T-cell (primary cell): ENCODE measurements at regions of chr10 and their contacts with region 1.

Region 1: DNA sequence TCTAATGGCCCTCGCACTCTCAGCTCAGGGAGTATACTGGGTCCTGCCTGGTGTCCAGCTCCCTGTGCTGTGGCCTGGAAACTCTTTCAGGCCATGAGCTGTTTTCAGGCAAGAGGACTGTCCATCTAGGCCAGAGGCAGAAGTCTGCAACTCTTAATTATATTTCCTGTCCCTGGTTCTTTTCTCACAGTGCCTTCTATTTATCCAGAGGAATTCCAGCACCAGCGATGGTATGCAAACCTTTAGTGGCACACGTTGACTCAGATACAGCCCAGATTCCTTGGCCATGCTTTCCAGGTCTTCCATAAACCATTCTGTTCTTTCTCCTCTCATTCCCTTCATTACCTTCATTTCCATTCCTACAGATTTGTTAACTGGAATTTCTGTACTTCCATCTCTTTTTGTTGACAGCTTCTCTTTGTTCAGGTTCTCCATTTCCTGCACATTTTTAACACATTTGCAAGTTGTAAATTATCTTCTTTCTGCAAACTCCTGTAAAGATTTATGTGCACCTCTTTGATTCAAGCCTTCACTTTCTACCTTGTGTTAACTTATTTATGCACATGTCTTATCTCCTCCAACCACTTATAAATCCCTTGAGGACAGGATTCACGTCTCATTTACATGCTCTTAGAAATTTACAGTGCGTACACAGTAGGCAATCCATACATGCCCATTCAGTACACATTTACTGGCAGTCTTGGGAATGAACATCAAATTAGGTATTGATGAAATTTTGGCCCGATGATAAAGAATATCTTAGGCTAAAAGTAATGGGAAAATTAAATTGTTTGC is 172.1 kb downstream of the CELF2 start:
- DNase-seq: no peak
- ATAC-seq: no peak
- H3K4me3 ChIP-seq: peak overlapping the region in 1 of 2 donors; percentile 27
- H3K4me3 Mint-ChIP-seq: peak overlapping the region; percentile 4 to 61 (median 40)
- H3K27ac ChIP-seq: peak overlapping the region; percentile 53
- H3K27ac Mint-ChIP-seq: peak overlapping the region; percentile 42 to 77
- H3K4me1 ChIP-seq: peaks cover 28 to 60% of the 10 kb centered on the region in 2 experiments
- H3K4me1 Mint-ChIP-seq: peaks cover 92 to 98% (median 95%) of the 10 kb centered on the region in 3 donors
- H3K27me3 ChIP-seq: no peaks in the 10 kb centered on the region
- H3K27me3 Mint-ChIP-seq: no peaks in the 10 kb centered on the region

Region 2: DNA sequence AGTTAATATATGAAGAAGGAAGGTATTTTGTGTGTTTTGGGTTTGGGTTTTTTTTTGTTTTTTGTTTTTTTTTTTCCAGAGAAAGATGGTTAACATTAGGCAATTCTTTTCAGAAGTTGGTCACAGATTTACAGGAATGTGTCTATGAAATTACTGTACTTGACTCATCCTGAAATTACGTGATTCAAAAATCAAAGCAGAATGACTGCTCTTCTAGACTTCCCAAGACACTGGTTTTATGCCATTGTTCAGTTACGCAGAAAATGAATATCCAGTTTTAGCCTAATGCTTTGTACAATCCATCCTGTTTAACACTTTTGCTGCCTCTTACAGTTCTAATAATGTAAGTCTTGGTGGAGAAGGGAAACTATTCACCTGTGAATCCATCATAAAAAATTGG is 211.8 kb before region 1 on chr10:
- CTCF ChIA-PET with region 1: no interaction called
- POLR2A ChIA-PET with region 1: interaction called in 1 of 2 experiments, 11 read pairs
- DNase-seq: no peak
- ATAC-seq: no peak
- H3K4me3 ChIP-seq: no peak overlapping the region
- H3K4me3 Mint-ChIP-seq: no peak overlapping the region
- H3K27ac ChIP-seq: no peak overlapping the region
- H3K27ac Mint-ChIP-seq: no peak overlapping the region
- H3K4me1 ChIP-seq: no peaks in the 10 kb centered on the region
- H3K4me1 Mint-ChIP-seq: no peaks in the 10 kb centered on the region
- H3K27me3 ChIP-seq: peaks cover 0 to 14% of the 10 kb centered on the region in 2 experiments
- H3K27me3 Mint-ChIP-seq: peaks cover 19% of the 10 kb centered on the region in 2 donors

Region 3: DNA sequence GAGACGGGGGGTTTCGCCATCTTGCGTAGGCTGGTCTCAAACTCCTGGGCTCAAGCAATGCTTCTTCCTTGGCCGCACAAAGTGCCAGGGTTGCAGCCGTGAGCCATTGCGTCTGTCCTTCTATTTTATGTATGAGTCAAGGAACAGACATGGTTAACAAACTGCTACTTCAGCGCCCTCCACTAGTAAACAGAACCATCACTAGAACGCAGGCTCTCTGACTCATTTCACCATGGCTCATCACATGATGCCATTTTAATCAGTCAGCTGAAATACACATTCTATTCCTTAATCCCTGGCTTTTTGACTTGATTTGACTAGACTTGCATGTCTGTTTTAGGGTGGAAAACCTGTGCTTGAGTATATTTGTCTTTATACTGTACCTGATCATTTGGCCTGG is 130.8 kb before region 1 on chr10:
- CTCF ChIA-PET with region 1: no interaction called
- POLR2A ChIA-PET with region 1: no interaction called
- DNase-seq: no peak
- ATAC-seq: no peak
- H3K4me3 ChIP-seq: no peak overlapping the region
- H3K4me3 Mint-ChIP-seq: no peak overlapping the region
- H3K27ac ChIP-seq: no peak overlapping the region
- H3K27ac Mint-ChIP-seq: no peak overlapping the region
- H3K4me1 ChIP-seq: no peaks in the 10 kb centered on the region
- H3K4me1 Mint-ChIP-seq: no peaks in the 10 kb centered on the region
- H3K27me3 ChIP-seq: peaks cover 0 to 9% of the 10 kb centered on the region in 2 experiments
- H3K27me3 Mint-ChIP-seq: peaks cover 15 to 18% of the 10 kb centered on the region in 2 donors

Region 4: GRCh38 chr10:11104772-11105675 is 84.8 kb before region 1 on chr10:
- CTCF ChIA-PET with region 1: interaction called in 1 of 2 experiments, 4 read pairs
- POLR2A ChIA-PET with region 1: interaction called in 1 of 2 experiments, 10 read pairs
- DNase-seq: peak in 2 of 35 experiments; percentile 6 to 27
- ATAC-seq: peak; percentile 23 to 70 (median 50)
- H3K4me3 ChIP-seq: no peak overlapping the region
- H3K4me3 Mint-ChIP-seq: peak overlapping the region; percentile 25 to 55 (median 49)
- H3K27ac ChIP-seq: peak overlapping the region; percentile 63
- H3K27ac Mint-ChIP-seq: peak overlapping the region; percentile 33 to 88
- H3K4me1 ChIP-seq: peaks cover 0 to 10% of the 10 kb centered on the region in 2 experiments
- H3K4me1 Mint-ChIP-seq: peaks cover 14 to 21% (median 20%) of the 10 kb centered on the region in 3 donors
- H3K27me3 ChIP-seq: no peaks in the 10 kb centered on the region
- H3K27me3 Mint-ChIP-seq: peaks cover 0 to 1% of the 10 kb centered on the region in 2 donors

Region 5: GRCh38 chr10:11324761-11325321 is 135.1 kb after region 1 on chr10:
- CTCF ChIA-PET with region 1: no interaction called
- POLR2A ChIA-PET with region 1: interaction called in 1 of 2 experiments, 15 read pairs
- DNase-seq: no peak
- ATAC-seq: no peak
- H3K4me3 ChIP-seq: no peak overlapping the region
- H3K4me3 Mint-ChIP-seq: no peak overlapping the region
- H3K27ac ChIP-seq: no peak overlapping the region
- H3K27ac Mint-ChIP-seq: peak overlapping the region; percentile 39 to 53
- H3K4me1 ChIP-seq: peaks cover 0 to 22% of the 10 kb centered on the region in 2 experiments
- H3K4me1 Mint-ChIP-seq: peaks cover 33 to 55% (median 43%) of the 10 kb centered on the region in 3 donors
- H3K27me3 ChIP-seq: no peaks in the 10 kb centered on the region
- H3K27me3 Mint-ChIP-seq: no peaks in the 10 kb centered on the region